Ovary (tissue), 10 donors: ENCODE measurements at regions of chr2 and their contacts with region 1.

Region 1: GRCh38 chr2:240179941-240180666 is 39.6 kb upstream of the OTOS start:
- DNase-seq: peak in 1 of 5 donors; percentile 9
- H3K4me3 ChIP-seq: no peak overlapping the region
- H3K27ac ChIP-seq: no peak overlapping the region
- H3K4me1 ChIP-seq: no peaks in the 10 kb centered on the region
- H3K27me3 ChIP-seq: no peaks in the 10 kb centered on the region
- CTCF ChIP-seq: no peak
- EP300 ChIP-seq: no peak
- POLR2A ChIP-seq: no peak

Region 2: DNA sequence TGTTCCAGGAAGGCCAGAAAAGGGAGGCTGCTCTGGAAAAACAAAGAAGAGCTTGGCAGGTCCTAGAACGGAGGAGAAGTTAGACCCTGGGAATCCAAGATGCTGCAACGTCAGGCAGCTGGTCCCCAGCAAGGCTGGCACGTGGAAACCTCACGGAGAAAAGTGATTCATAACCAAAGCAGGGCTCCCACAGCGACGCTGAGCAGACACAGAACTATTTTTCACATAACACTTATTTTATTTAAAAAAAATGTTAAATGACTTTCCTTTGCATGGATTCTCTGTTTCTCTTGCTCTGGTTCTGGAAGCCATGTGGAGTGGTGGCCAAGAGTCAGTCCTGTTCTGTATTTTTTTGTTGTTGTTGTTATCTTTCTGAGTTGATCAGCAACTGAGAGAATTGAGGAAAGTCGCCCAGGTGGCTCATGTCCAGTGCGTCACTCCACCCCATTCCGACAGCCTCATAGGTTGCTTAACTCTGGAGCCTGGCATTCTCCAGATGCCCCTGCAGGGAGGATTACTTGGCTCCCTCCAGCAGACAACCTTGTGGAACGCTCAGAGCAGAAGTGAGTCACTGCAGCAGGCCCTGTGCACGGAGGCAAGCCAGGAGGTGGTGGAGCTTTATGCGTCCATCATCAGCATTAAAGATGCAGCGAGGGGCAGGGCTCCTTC is 549.4 kb before region 1 on chr2:
- intact Hi-C with region 1: loop called in 1 of 4 experiments (anchors 5 kb)
- DNase-seq: no peak
- H3K4me3 ChIP-seq: no peak overlapping the region
- H3K27ac ChIP-seq: no peak overlapping the region
- H3K4me1 ChIP-seq: no peaks in the 10 kb centered on the region
- H3K27me3 ChIP-seq: no peaks in the 10 kb centered on the region
- CTCF ChIP-seq: no peak
- EP300 ChIP-seq: no peak
- POLR2A ChIP-seq: no peak

Region 3: GRCh38 chr2:239869383-239870155 is 310.5 kb before region 1 on chr2:
- intact Hi-C with region 1: no loop called
- DNase-seq: no peak
- H3K4me3 ChIP-seq: no peak overlapping the region
- H3K27ac ChIP-seq: no peak overlapping the region
- H3K4me1 ChIP-seq: no peaks in the 10 kb centered on the region
- H3K27me3 ChIP-seq: no peaks in the 10 kb centered on the region
- CTCF ChIP-seq: no peak
- EP300 ChIP-seq: no peak
- POLR2A ChIP-seq: no peak